Activated CD4-positive, alpha-beta T cell treated with anti-CD3 and anti-CD28 coated beads for 36 hours (primary cell): ENCODE measurements at regions of chr22 and their contacts with region 1.

Region 1: GRCh38 chr22:24423519-24424000 is 3.8 kb upstream of the ADORA2A start:
- DNase-seq: peak; percentile 81
- ATAC-seq: peak; percentile 24
- H3K4me3 Mint-ChIP-seq: peak overlapping the region; percentile 94
- H3K27ac Mint-ChIP-seq: no peak overlapping the region
- H3K4me1 Mint-ChIP-seq: peaks cover 25% of the 10 kb centered on the region
- H3K27me3 Mint-ChIP-seq: peaks cover 3% of the 10 kb centered on the region

Region 2: GRCh38 chr22:24325105-24325757 is 98.3 kb before region 1 on chr22:
- CTCF ChIA-PET with region 1: interaction called, 3 read pairs
- POLR2A ChIA-PET with region 1: no interaction called
- intact Hi-C with region 1: loop called in 1 of 2 experiments (anchors 5 kb)
- DNase-seq: peak; percentile 23
- ATAC-seq: peak; percentile 85
- H3K4me3 Mint-ChIP-seq: no peak overlapping the region
- H3K27ac Mint-ChIP-seq: peak overlapping the region; percentile 44
- H3K4me1 Mint-ChIP-seq: peaks cover 35% of the 10 kb centered on the region
- H3K27me3 Mint-ChIP-seq: no peaks in the 10 kb centered on the region

Region 3: GRCh38 chr22:24386937-24387471 is 36.6 kb before region 1 on chr22:
- CTCF ChIA-PET with region 1: no interaction called
- POLR2A ChIA-PET with region 1: no interaction called
- intact Hi-C with region 1: no loop called
- DNase-seq: no peak
- ATAC-seq: no peak
- H3K4me3 Mint-ChIP-seq: no peak overlapping the region
- H3K27ac Mint-ChIP-seq: no peak overlapping the region
- H3K4me1 Mint-ChIP-seq: peaks cover 9% of the 10 kb centered on the region
- H3K27me3 Mint-ChIP-seq: no peaks in the 10 kb centered on the region

Region 4: GRCh38 chr22:24503137-24503842 is 79.7 kb after region 1 on chr22:
- CTCF ChIA-PET with region 1: interaction called, 10 read pairs
- POLR2A ChIA-PET with region 1: no interaction called
- intact Hi-C with region 1: loop called (anchors 1 kb)
- DNase-seq: peak; percentile 81
- ATAC-seq: peak; percentile 90
- H3K4me3 Mint-ChIP-seq: no peak overlapping the region
- H3K27ac Mint-ChIP-seq: no peak overlapping the region
- H3K4me1 Mint-ChIP-seq: peaks cover 9% of the 10 kb centered on the region
- H3K27me3 Mint-ChIP-seq: no peaks in the 10 kb centered on the region

Region 5: DNA sequence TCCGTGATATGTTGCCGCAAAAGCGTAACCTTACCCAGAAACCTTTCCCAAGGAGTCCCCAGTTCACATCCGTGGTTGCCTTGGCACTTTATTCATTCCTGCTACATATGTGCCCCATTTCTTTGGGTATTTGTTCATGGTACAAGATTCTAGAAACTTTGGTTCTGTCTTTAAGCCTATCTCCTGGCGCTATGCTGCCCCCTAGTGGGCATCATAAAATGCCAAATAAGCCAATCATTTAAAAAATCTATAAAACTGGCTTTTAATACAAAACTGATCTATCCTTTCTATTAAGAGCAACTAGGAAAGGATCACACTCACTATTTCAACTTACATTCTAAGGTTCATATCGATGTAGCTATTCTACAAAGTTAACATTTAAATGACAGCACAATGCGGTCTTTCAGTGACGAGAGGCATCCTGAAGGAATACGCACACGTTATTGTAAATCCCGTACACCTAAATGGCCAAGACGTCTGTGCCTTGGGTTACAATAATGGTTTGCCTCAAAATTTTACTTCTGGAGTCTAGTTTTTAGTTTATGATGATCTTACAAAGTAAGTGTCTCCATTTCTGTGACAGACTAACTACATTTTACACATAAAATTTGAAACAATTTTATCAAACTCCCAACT is 334.7 kb after region 1 on chr22:
- CTCF ChIA-PET with region 1: no interaction called
- POLR2A ChIA-PET with region 1: no interaction called
- intact Hi-C with region 1: loop called in 1 of 2 experiments (anchors 2 kb)
- DNase-seq: peak; percentile 76
- ATAC-seq: no peak
- H3K4me3 Mint-ChIP-seq: no peak overlapping the region
- H3K27ac Mint-ChIP-seq: no peak overlapping the region
- H3K4me1 Mint-ChIP-seq: no peaks in the 10 kb centered on the region
- H3K27me3 Mint-ChIP-seq: no peaks in the 10 kb centered on the region